ENCODE measurements at regions of chr12 and their contacts with region 1.

Region 1: GRCh38 chr12:70576346-70577282 is 60.6 kb downstream of the PTPRB start:
- DNase-seq: no peak
- H3K4me3 Mint-ChIP-seq: no peak overlapping the region
- H3K27ac Mint-ChIP-seq: no peak overlapping the region
- H3K4me1 Mint-ChIP-seq: no peaks in the 10 kb centered on the region
- H3K27me3 Mint-ChIP-seq: peaks cover 3% of the 10 kb centered on the region

Region 2: DNA sequence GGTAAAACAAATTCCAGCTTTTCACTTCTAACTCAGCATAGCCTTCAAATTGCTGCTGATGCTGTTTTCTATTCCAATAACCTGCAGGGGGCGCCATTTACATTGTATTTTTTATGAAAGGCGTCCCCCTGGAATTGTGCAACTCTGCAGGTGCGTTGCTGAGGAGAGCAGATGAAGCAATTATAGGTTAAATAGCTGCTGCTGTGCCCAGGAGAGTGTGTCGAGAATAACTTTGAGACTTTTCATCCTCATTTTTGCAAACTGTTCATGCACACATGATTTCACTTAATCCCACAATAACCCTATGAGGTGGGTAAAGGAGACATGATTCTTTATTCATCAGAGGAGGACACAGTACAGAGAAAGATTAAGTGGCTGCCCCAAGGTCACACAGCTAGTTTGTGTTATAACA is 675.9 kb before region 1 on chr12:
- CTCF ChIA-PET with region 1: interaction called, 33 read pairs
- POLR2A ChIA-PET with region 1: no interaction called
- DNase-seq: peak; percentile 65
- H3K4me3 Mint-ChIP-seq: no peak overlapping the region
- H3K27ac Mint-ChIP-seq: no peak overlapping the region
- H3K4me1 Mint-ChIP-seq: peaks cover 2% of the 10 kb centered on the region
- H3K27me3 Mint-ChIP-seq: peaks cover 3% of the 10 kb centered on the region

Measured in activated CD4-positive, alpha-beta memory T cell treated with anti-CD3 and anti-CD28 coated beads, Interleukin-2, amount 10 ng/mL, durations not matched to agents 7 days and 5 days (primary cell).